Aorta (tissue), 5 donors: ENCODE measurements at regions of chr6 and their contacts with region 1.

Region 1: DNA sequence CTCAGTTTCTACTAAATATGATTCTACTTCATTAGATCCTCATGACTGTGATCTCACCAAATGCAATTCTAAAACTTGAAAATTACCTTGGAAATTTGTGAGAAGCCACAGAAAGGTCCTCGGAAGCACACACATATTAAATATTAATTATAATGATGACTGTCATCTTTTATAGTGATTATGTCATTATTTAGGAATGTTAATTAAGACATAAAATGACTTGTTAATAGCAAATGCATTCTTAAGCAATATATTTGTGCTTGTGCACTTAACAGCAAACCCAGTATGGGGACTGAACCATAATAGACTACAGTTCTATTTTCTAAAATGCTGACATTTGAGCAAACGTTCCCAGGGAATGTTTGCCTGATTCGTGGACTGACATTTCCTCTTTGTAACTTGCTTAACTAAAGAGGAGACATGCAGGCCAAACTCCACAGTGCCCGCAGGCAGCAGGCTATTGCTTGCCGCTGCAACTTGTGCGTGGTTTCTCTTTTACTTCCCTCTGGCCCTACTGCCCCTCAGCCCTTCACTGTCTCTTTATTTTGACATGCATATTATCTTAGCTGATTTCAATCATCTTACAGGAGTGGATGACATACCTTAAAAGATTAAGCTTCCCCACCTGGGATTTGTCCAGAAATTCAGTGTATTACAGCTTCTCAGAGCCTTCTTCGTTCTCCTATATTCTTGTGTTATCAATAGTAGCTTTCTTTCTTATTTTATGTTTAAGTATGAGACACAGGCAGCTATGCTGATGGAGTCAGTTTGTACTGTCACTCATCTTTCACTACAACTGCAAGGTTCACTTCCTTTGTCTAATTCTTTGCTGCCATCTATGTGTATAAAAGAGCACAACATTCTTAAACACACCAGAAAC is 141.5 kb downstream of the GMDS start:
- DNase-seq: peak in 1 of 2 donors; percentile 63
- ATAC-seq: peak; percentile 87
- H3K4me3 ChIP-seq: peak overlapping the region; percentile 61 to 94
- H3K27ac ChIP-seq: peak overlapping the region; percentile 84 to 90
- H3K4me1 ChIP-seq: no peaks in the 10 kb centered on the region
- H3K27me3 ChIP-seq: no peaks in the 10 kb centered on the region

Region 2: DNA sequence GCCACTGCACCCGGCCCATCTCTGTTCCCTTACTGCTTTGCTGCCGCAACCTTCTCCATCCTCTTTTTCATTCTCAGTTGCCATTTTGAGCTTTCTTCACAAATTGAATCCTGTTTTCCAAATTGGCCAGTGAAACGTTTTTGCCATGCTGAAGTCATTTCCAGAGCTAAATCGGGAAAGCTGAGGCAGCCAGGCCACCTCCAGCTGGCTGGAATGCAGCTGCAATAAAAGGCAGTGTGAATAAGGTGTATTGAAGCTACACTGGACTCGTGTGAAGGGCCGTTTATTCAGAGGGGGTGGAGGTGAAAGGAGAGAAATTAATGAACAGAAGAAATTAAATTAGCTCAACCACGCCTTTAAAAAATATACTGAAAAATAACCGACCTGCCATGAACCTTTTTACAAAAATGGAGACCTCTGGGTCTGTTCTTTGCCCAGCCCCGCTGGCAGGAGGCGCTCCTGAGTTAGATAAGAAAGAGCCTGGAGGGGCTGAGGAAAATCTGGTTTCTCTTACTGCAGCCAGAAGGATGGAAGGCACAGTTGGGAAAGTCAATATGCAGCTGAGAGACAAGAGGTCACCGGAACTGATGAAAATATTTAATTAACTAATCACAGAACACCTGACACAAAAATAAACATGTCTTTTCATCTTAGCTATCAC is 210.3 kb before region 1 on chr6:
- intact Hi-C with region 1: loop called in 1 of 2 experiments (anchors 5 kb)
- DNase-seq: no peak
- ATAC-seq: peak; percentile 51
- H3K4me3 ChIP-seq: no peak overlapping the region
- H3K27ac ChIP-seq: peak overlapping the region; percentile 93 to 94
- H3K4me1 ChIP-seq: peaks cover 0 to 10% of the 10 kb centered on the region in 2 donors
- H3K27me3 ChIP-seq: no peaks in the 10 kb centered on the region